Mammary epithelial cell (primary cell): ENCODE measurements at regions of chr6 and their contacts with region 1.

Region 1: DNA sequence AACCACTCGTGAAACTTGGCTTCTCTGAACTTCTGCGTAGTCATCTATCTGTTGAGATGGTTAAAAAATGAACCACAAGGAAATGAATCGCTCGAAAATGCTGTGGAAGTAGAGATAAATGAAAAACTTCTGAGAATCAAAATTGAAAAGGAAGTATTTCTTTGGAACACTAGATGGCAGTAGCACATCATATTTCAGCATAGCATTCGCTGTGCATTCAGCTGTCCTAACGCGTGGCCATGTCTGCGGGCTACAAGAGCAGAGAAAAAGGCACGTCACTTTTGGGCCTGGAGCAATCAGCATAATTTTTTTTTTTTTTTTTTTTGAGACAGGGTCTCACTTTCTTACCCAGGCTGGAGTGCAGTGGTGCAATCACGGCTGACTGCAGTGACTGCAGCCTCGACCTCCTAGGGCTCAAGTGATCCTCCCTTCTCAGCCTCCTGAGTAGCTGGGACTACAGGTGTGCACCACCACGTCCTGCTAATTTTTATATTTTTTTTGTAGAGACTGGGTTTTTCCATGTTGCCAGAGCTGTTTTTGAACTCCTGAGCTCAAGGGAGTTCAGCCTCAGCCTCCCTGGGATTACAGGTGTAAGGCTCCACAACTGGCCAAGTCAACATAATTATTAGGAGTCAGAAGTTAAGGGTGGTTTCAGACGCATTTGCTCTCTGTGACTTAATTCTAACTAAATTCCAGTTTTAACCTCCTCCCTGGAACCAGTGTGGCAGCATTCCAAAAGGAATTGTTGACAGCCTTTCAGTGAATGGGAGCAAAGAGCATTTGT is 8.8 kb upstream of the PERP start:
- DNase-seq: peak; percentile 44
- H3K4me3 ChIP-seq: no peak overlapping the region
- H3K27ac ChIP-seq: no peak overlapping the region
- H3K4me1 ChIP-seq: no peaks in the 10 kb centered on the region
- H3K27me3 ChIP-seq: no peaks in the 10 kb centered on the region
- CTCF ChIP-seq: peak; percentile 54 to 65

Region 2: DNA sequence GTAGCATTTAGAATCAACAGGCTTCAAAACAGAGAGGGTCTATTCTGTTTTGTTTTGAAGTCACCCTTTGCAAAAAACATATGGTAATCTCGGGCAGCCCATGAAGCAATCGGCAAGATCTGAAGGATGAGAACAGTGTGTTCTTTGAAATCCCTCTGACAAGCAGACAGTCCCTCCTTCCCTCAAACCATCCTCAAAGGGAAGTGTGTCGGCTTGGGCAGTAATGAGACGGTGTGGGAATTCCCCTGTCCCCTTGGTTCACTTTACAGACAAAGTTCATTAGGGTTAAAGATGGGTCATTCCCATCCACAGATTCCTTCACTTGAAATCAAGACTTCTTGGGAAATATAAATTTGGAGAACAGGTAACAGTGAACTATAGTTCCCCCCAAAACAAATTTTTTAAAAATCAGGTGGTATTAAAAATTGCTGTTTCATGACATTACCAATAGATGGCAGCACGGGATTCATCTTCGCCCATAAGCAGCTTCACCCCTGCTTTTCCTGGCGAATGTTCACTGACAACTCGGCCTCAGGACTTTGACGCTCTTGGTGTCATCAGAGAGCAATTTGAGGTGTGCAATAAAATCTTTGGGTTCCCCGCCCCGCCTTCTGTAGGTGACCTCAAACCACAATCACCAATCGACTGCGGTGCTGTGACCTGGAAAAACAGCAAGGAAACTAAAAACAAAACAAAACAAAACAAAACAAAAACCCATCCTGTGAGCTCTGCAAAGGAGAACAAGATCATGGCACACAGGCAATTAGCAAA is 408.3 kb before region 1 on chr6:
- CTCF ChIA-PET with region 1: no interaction called
- dilution Hi-C with region 1: no loop called
- in situ Hi-C with region 1: loop called in 1 of 2 experiments (anchors 25 kb)
- intact Hi-C with region 1: no loop called
- DNase-seq: peak; percentile 92
- H3K4me3 ChIP-seq: no peak overlapping the region
- H3K27ac ChIP-seq: peak overlapping the region; percentile 64
- H3K4me1 ChIP-seq: peaks cover 7% of the 10 kb centered on the region
- H3K27me3 ChIP-seq: no peaks in the 10 kb centered on the region
- CTCF ChIP-seq: peak; percentile 65 to 75

Region 3: GRCh38 chr6:138287144-138287955 is 171.3 kb after region 1 on chr6:
- CTCF ChIA-PET with region 1: no interaction called
- dilution Hi-C with region 1: no loop called
- in situ Hi-C with region 1: no loop called
- intact Hi-C with region 1: loop called (anchors 1 kb)
- DNase-seq: peak; percentile 33
- H3K4me3 ChIP-seq: no peak overlapping the region
- H3K27ac ChIP-seq: peak overlapping the region; percentile 88
- H3K4me1 ChIP-seq: peaks cover 30% of the 10 kb centered on the region
- H3K27me3 ChIP-seq: no peaks in the 10 kb centered on the region
- CTCF ChIP-seq: peak; percentile 64 to 79

Region 4: DNA sequence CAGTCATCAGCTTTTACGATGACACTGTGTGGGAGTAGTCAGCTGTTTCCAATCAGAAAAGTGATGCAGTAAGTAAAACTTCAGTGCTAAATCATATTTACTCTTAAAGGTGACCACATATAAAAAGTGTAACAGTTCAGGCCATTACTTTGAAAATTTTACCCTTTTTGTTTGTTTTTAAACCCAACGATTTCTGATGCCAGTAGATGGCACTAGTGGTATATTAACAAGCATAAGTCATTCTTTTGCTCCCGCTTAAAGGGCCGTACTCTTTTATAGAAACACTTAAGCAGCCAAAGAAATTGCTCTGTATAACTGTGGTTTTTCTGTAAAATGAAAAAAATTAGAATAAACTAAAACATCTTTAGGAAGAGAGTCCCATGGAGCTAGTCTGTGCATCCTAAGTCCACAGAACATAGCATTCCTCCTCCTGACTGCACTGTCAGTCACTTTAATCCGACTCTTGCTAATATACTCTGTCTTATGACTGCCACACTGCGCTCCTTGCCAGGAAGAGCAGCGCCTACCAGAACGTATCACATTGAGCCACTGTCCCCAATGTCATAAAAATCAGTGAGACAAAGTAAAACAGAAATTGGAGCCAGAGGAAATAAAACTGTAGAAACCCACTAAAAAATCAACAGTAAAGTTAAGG is 313.0 kb after region 1 on chr6:
- CTCF ChIA-PET with region 1: no interaction called
- dilution Hi-C with region 1: no loop called
- in situ Hi-C with region 1: no loop called
- intact Hi-C with region 1: loop called (anchors 2 kb)
- DNase-seq: peak; percentile 24
- H3K4me3 ChIP-seq: no peak overlapping the region
- H3K27ac ChIP-seq: no peak overlapping the region
- H3K4me1 ChIP-seq: peaks cover 4% of the 10 kb centered on the region
- H3K27me3 ChIP-seq: no peaks in the 10 kb centered on the region
- CTCF ChIP-seq: peak; percentile 57 to 63

Region 5: DNA sequence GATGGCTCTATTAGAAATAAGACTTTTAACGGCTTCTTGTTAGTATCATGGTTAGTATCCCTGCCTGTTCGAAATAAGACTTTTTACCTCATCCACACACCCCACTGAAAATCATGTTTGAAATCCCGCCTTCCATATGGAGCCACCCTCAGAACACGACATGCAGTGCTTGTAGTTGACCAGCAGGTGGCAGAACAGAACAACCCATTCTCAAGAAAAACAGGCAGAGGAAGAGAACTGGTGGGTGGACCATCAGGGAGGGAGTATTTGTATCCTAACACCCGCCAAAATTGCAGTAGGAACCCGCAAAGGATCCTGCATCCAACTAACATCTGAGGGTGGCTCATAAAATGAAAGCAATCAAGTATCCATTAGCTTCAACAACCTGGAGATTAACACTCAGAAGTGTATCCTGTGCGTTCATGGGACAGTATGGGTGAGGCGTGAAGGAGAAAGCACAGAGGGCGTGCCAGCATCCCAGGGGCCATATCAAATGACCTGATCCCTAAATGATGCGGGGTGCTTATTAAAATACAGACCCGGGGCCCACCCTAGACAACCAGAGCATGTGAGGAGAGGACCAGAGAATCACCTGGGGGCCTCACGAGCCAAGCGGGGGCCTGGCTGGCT is 472.9 kb after region 1 on chr6:
- CTCF ChIA-PET with region 1: no interaction called
- dilution Hi-C with region 1: no loop called
- in situ Hi-C with region 1: no loop called
- intact Hi-C with region 1: loop called (anchors 2 kb)
- DNase-seq: peak; percentile 55
- H3K4me3 ChIP-seq: no peak overlapping the region
- H3K27ac ChIP-seq: no peak overlapping the region
- H3K4me1 ChIP-seq: peaks cover 18% of the 10 kb centered on the region
- H3K27me3 ChIP-seq: no peaks in the 10 kb centered on the region
- CTCF ChIP-seq: peak; percentile 93 to 94

Region 6: DNA sequence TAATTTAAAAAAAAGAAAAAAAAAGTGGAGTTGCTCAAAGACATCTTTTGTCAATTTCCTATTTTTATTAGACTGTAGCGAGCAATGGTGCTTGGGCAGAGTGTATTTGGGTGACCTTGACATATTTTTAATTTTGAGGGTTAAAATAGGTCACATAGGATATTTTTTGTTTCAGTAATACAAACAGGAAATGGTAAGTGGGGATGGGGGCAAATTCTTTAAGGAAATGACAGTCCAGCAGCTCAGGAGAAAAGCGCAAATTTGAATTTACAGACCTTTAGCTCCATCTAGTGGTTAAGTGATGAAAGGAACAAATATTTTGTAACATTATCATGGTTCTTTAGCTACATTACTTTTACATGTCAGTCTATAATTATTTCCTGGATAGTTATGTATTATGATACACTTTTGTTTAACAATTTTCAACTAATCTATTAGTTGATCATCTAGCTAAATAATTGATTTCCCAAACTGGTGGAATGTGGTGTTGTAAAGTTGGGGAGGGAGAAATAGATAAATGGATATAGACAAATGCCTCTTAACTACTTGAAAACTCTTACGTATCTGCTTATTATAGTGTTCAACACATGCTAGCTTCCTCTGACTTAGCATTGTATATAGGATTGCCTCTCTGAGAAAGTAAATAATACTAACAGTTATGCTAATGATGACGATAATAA is 1248.4 kb after region 1 on chr6:
- CTCF ChIA-PET with region 1: no interaction called
- dilution Hi-C with region 1: no loop called
- in situ Hi-C with region 1: no loop called
- intact Hi-C with region 1: loop called (anchors 10 kb)
- DNase-seq: peak; percentile 27
- H3K4me3 ChIP-seq: no peak overlapping the region
- H3K27ac ChIP-seq: no peak overlapping the region
- H3K4me1 ChIP-seq: peaks cover 9% of the 10 kb centered on the region
- H3K27me3 ChIP-seq: no peaks in the 10 kb centered on the region
- CTCF ChIP-seq: peak; percentile 41 to 53